ENCODE measurements at regions of chr5 and their contacts with region 1.

Region 1: DNA sequence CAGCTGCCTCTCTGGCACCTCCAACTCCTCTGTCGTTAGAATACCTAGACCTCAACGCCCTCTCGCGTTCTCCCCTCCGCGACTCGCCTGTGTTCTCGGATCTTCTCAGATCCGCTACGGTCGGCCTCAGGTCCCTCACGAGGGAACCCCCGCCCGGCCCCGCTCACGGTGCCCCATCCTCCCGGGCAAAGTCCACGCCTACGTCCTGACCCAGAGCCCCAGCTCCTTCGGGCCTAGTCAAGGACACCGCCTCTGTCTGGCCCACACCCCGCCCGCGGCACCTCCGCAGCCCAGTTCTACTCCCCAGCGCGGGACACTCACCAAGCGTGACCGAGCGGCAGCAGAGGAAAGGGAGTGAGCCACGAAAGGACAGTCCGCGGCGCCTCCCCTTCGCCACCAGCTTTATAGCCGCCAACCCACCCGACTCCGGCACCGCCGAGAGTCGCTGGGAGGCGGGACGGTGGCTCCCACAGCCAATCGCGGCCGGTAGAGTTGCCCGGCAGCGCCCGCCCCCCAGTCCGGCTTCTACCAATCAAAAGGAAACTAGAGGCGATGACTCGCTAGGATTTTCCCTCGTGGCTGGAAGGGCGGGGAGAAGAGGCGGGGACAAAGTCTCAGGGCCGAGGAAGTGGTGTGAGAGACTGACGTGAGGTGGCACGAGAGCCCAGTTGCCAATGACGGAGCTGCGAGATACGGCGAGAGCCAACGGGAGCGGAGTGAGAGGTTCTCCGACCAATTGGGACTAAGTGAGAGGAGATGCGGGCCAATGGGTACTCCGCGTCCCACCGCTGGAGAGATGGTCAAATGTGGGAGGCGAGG is at the start of gene HMGCS1:
- H3K4me3 Mint-ChIP-seq: peak within 1 kb of the TSS; percentile 98
- H3K27ac Mint-ChIP-seq: peak within 1 kb of the TSS; percentile 98
- H3K4me1 Mint-ChIP-seq: peaks cover 40% of the 10 kb centered on the region
- H3K27me3 Mint-ChIP-seq: peaks cover 5% of the 10 kb centered on the region

Region 2: DNA sequence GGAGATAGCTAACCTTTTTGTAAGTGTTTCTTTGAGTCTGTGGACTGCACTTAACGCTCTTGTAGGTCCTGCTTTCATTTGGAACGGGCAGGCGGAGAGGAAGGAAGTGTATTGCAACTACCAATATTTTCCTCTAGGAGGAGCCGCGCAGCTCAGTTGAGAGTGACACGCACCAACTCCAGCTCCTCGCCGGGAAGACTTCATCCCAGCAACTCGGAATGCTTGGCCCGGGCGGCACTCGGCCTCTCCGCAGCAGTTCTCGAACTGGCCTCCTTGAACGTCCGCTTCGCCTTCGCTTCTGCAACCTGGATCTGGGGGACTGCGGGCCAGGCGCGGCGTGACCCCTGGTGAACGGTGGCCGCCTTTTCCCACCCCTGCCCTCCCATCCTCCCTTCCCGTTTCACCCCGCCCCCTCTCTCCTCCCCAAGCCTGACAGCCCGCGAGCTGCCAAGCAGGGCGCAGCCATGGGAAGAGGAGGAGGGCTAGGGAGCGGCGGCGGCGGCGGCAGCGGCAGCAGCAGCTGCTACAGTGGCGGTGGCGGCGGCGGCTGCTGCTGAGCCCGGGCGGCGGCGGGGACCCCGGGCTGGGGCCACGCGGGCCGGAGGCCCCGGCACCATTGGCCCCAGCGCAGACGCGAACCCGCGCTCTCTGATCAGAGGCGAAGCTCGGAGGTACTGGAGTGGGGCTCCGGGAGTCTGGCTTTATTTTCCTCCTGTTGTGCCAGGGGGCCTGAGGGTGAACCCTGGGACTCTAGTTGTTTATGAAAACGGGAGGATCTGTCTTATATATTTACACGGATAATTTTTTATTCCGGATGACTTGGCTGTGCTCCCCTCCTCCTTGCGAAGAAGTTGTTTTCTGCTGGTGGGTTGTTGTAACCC is 889.7 kb before region 1 on chr5 and contains the start of gene GHR:
- intact Hi-C with region 1: no loop called
- H3K4me3 Mint-ChIP-seq: no peak within 1 kb of the TSS
- H3K27ac Mint-ChIP-seq: no peak within 1 kb of the TSS
- H3K4me1 Mint-ChIP-seq: no peaks in the 10 kb centered on the region
- H3K27me3 Mint-ChIP-seq: peaks cover 5% of the 10 kb centered on the region

Region 3: DNA sequence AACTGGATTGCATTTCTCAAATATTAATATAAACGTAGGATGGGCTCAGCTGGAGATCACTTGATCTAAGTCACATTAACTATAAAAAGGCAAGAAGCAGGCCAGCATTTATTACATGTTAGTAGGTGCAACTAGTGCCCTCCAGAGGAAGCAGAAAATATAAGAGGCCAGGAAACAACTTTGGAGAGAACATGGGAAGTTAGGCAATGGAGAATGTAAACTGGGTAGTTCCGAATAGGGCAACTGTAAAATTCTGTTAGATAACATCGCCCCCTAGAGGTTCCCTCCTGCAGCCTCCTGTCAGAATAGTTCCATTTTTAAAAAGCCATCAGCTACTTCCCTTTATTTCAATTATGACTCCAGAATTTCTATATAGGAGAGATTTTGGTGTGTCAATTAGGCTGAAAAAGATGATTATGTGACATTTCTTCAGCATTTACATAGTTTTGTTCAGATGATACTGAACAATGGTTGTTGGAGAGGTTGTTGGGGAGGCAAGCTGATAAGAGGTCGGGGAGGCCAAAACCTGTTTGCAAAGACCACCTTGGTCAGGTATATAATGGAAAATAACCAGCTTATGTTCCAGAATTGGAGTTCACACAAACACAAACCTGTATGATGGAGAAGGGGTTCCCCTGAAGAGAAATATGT is 76.6 kb after region 1 on chr5:
- intact Hi-C with region 1: loop called (anchors 5 kb)
- H3K4me3 Mint-ChIP-seq: no peak overlapping the region
- H3K27ac Mint-ChIP-seq: peak overlapping the region; percentile 4
- H3K4me1 Mint-ChIP-seq: peaks cover 18% of the 10 kb centered on the region
- H3K27me3 Mint-ChIP-seq: no peaks in the 10 kb centered on the region

Region 4: DNA sequence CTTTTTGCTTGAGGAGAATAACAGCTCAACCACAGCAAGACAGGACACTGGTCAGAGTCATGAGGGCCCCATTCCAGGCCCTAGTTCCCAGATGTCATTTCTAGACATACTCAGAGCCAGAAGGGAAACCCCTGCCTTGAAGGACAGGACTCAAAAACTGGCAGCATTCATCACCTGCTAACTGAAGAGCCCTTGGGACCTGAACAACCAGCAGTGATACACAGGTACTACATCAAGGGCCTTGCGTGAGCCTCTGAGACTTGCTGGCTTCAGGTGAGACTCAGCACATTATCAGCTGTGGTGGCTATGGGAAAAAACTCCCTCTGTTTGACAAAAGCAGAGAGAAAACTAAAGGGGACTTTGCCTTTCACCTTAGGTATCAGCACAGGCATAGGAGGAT is 147.8 kb after region 1 on chr5:
- intact Hi-C with region 1: no loop called
- H3K4me3 Mint-ChIP-seq: no peak overlapping the region
- H3K27ac Mint-ChIP-seq: no peak overlapping the region
- H3K4me1 Mint-ChIP-seq: no peaks in the 10 kb centered on the region
- H3K27me3 Mint-ChIP-seq: no peaks in the 10 kb centered on the region

Region 5: GRCh38 chr5:43514816-43515677 is 201.8 kb after region 1 on chr5 and contains the start of gene C5orf34:
- intact Hi-C with region 1: loop called (anchors 1 kb)
- H3K4me3 Mint-ChIP-seq: peak within 1 kb of the TSS; percentile 79
- H3K27ac Mint-ChIP-seq: peak within 1 kb of the TSS; percentile 88
- H3K4me1 Mint-ChIP-seq: peaks cover 24% of the 10 kb centered on the region
- H3K27me3 Mint-ChIP-seq: no peaks in the 10 kb centered on the region

Region 6: GRCh38 chr5:43602461-43603343 is 289.5 kb after region 1 on chr5 and contains the start of gene NNT:
- intact Hi-C with region 1: loop called (anchors 10 kb)
- H3K4me3 Mint-ChIP-seq: peak within 1 kb of the TSS; percentile 86
- H3K27ac Mint-ChIP-seq: peak within 1 kb of the TSS; percentile 87
- H3K4me1 Mint-ChIP-seq: peaks cover 38% of the 10 kb centered on the region
- H3K27me3 Mint-ChIP-seq: no peaks in the 10 kb centered on the region

Region 7: DNA sequence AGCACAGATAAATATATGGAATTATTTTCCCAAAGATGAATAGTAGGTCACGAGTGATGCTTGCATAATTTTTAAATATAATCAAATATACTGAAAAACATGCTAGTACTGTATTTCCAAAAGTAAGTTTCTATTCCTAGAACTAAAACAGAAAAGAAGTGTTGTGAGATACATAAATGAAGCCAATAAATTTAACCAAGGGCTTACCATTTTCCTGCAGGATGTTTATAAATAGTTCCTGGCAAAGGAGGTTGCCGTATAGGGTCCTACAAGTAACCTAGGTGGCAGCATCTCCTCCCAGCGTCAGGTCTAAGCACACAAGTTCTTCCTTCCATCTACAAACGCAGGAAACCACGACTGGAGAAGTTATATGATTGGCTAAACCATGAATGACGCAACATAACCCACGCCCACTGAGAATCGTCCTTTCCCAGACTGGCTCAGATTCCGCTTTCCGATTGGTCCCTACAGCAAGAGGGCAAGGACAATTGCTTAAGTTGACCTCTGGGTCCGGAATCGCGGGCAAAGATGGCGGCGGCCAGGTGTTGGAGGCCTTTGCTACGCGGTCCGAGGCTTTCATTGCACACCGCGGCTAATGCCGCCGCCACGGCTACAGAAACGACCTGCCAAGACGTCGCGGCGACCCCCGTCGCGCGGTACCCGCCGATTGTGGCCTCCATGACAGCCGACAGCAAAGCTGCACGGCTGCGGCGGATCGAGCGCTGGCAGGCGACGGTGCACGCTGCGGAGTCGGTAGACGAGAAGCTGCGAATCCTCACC is 1495.4 kb after region 1 on chr5 and contains the start of gene MRPS30:
- intact Hi-C with region 1: loop called (anchors 10 kb)
- H3K4me3 Mint-ChIP-seq: peak within 1 kb of the TSS; percentile 89
- H3K27ac Mint-ChIP-seq: peak within 1 kb of the TSS; percentile 92
- H3K4me1 Mint-ChIP-seq: peaks cover 15% of the 10 kb centered on the region
- H3K27me3 Mint-ChIP-seq: no peaks in the 10 kb centered on the region